Common myeloid progenitor, CD34-positive (primary cell): ENCODE measurements at regions of chr18 and their contacts with region 1.

Region 1: DNA sequence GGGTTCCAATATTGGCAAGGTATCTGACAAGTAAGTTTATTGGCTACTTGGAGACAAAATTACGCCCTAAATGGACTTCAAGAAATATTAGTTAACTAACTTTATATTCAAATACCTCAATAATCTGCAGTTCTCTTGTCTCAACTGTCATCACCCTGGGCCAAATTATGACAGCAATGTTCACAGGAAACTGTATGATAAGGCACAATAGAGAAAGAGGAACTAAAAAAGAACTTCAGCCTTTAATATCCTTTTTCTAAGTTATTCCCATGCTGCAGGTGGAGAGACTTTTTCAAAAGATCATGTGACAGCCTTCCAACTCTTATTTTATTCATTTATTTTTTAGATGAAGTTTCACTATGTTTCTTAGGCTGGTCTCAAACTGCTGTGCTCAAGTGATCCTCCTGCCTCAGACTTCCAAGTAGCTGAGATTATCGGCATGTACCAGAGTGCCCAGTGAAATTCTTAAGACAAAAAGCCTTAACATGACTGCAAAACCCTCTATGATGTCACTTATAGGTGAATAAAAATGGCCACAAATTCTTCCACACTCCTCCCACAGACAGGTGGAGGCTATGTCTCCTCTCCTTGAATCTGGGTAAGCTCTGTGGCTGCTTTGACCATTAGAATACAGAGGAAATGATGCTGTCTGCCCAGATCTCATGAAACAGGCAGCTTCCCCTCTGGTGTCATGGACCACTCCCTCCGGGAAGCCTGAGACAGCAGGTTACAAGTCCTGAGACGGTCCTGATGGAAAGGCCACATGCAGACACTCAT is 211.0 kb downstream of the TGIF1 start:
- DNase-seq: peak; percentile 63 to 92 (median 87)
- H3K4me3 ChIP-seq: peak overlapping the region in 5 of 7 experiments; percentile 0 to 43 (median 24)
- H3K27ac ChIP-seq: peak overlapping the region; percentile 29 to 81
- H3K4me1 ChIP-seq: peaks cover 29 to 58% (median 42%) of the 10 kb centered on the region in 4 experiments
- H3K27me3 ChIP-seq: no peaks in the 10 kb centered on the region

Region 2: GRCh38 chr18:3104190-3105054 is 556.5 kb before region 1 on chr18:
- CTCF ChIA-PET with region 1: no interaction called
- POLR2A ChIA-PET with region 1: no interaction called
- DNase-seq: no peak
- H3K4me3 ChIP-seq: no peak overlapping the region
- H3K27ac ChIP-seq: no peak overlapping the region
- H3K4me1 ChIP-seq: no peaks in the 10 kb centered on the region
- H3K27me3 ChIP-seq: no peaks in the 10 kb centered on the region

Region 3: GRCh38 chr18:3297025-3297984 is 363.6 kb before region 1 on chr18:
- CTCF ChIA-PET with region 1: interaction called, 20 read pairs
- POLR2A ChIA-PET with region 1: no interaction called
- DNase-seq: peak; percentile 93 to 98 (median 97)
- H3K4me3 ChIP-seq: peak overlapping the region; percentile 73 to 93 (median 91)
- H3K27ac ChIP-seq: peak overlapping the region; percentile 29 to 83
- H3K4me1 ChIP-seq: peaks cover 3 to 9% (median 8%) of the 10 kb centered on the region in 4 experiments
- H3K27me3 ChIP-seq: no peaks in the 10 kb centered on the region